ENCODE measurements at regions of chr15 and their contacts with region 1.

Region 1: GRCh38 chr15:45338417-45338816 is 39.9 kb downstream of the GATM start:
- DNase-seq: no peak
- H3K4me3 ChIP-seq: no peak overlapping the region
- H3K27ac ChIP-seq: no peak overlapping the region
- H3K4me1 ChIP-seq: no peaks in the 10 kb centered on the region
- H3K27me3 ChIP-seq: no peaks in the 10 kb centered on the region
- CTCF ChIP-seq: no peak
- POLR2A ChIP-seq: no peak

Region 2: GRCh38 chr15:44879086-44879485 is 459.3 kb before region 1 on chr15:
- intact Hi-C with region 1: loop called (anchors 5 kb)
- DNase-seq: no peak
- H3K4me3 ChIP-seq: no peak overlapping the region
- H3K27ac ChIP-seq: no peak overlapping the region
- H3K4me1 ChIP-seq: no peaks in the 10 kb centered on the region
- H3K27me3 ChIP-seq: no peaks in the 10 kb centered on the region
- CTCF ChIP-seq: no peak
- POLR2A ChIP-seq: no peak

Region 3: GRCh38 chr15:45457641-45458433 is 119.4 kb after region 1 on chr15:
- intact Hi-C with region 1: no loop called
- DNase-seq: peak; percentile 56 to 62
- H3K4me3 ChIP-seq: peak overlapping the region; percentile 35 to 57 (median 44)
- H3K27ac ChIP-seq: peak overlapping the region; percentile 27 to 91
- H3K4me1 ChIP-seq: peaks cover 6 to 18% of the 10 kb centered on the region in 2 donors
- H3K27me3 ChIP-seq: no peaks in the 10 kb centered on the region
- CTCF ChIP-seq: peak; percentile 77 to 88 (median 87)
- POLR2A ChIP-seq: no peak

Measured in breast epithelium (tissue), 4 donors.